ENCODE measurements at regions of chr2 and their contacts with region 1.

Region 1: DNA sequence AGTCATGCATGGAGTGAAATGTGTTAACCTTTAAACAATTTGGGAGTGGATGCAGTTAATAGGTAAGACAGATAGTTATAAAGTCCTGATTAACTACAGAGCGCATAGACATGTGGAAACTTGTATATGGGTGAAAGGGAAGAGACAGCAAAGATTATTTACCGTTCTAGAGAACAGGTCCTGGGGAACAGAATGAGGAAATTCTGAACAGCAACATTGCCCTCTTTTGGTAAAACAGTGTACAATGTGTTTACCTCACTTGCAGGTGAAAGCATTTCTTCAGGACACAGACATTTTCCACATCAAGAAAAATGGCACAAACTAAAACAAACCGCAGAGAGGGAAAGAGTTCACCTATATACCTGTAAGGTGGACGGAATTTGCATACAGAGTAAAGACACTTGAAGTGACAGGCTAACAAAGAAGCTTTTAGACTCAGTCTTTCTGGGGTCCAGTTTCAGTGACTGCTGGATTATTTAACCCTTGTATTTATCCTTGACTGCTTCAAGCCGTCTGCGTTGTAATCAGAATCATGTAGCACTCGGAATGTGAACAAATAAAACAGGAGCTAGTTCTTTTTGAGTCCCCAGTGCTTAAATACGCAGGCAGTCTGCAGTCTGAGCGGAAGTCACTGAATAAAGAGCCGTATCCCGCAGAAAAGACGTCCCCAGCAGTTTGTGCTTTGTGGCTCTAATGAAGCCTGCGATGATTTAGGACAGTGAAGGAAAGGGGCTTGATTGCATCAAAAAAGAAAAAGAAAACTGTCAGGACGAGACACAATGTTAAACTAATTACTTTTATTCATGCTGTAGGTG is 364.8 kb upstream of the GALNT5 start:
- DNase-seq: no peak
- ATAC-seq: peak in 3 of 4 donors; percentile 48 to 69 (median 57)
- H3K4me3 ChIP-seq: peak overlapping the region in 11 of 12 donors; percentile 12 to 42 (median 32)
- H3K27ac ChIP-seq: no peak overlapping the region
- H3K4me1 ChIP-seq: peaks cover 0 to 6% (median 0%) of the 10 kb centered on the region in 12 donors
- H3K27me3 ChIP-seq: peaks cover 0 to 12% (median 0%) of the 10 kb centered on the region in 9 donors
- CTCF ChIP-seq: peak in 10 of 12 donors; percentile 36 to 59 (median 46)
- POLR2A ChIP-seq: no peak

Region 2: DNA sequence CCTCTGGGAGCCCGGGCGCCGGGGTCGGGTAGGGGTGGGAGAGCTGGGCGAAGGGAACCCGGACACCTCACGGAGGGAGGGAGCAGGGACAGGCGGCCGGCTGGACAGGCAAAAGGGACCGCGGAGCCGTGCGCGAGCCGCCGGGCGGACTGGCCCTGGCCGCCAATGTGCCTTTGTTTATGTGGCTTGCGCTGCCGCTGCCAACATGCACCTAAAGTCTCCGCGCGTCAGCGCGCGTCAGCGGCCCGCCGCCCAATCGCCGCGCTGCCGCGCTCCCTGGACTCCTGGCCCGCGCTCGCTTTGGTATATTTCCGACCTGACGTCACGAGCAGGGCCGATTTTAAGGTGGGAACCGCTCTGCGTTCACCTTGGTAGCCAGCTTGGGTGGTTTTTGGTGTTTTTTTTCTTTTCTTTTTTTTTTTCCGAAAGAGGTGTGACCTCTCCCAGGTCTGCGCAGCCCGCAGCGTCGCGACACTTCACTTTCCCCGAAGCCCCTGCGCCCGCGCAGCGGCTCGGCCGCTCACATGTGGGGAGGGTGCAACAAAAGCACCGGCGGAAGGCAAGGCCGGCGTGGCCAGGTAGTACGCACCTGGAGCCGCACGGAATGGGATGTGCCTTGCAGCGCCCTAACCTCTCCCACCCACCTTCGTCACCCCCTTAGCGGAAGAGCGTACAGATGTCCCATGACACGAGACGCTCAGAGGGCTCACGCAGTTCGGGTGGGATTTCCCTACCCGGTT is 560.0 kb before region 1 on chr2 and contains the start of gene NR4A2:
- intact Hi-C with region 1: loop called in 3 of 10 experiments (anchors 5 to 10 kb)
- DNase-seq: peak; percentile 91 to 93 (median 91)
- ATAC-seq: peak; percentile 62 to 81 (median 74)
- H3K4me3 ChIP-seq: peak within 1 kb of the TSS; percentile 44 to 87 (median 80)
- H3K27ac ChIP-seq: peak within 1 kb of the TSS; percentile 97 to 100 (median 99)
- H3K4me1 ChIP-seq: peaks cover 0 to 34% (median 7%) of the 10 kb centered on the region in 12 donors
- H3K27me3 ChIP-seq: peaks cover 0 to 29% (median 13%) of the 10 kb centered on the region in 9 donors
- CTCF ChIP-seq: no peak
- POLR2A ChIP-seq: peak; percentile 37 to 93
- total RNA-seq, gene NR4A2: 0.63 to 14.2 (median 1.1) TPM

Region 3: GRCh38 chr2:156649596-156649995 is 243.1 kb before region 1 on chr2:
- intact Hi-C with region 1: loop called in 1 of 10 experiments (anchors 5 kb)
- DNase-seq: peak in 4 of 5 donors; percentile 74 to 88 (median 80)
- ATAC-seq: peak; percentile 99 to 100 (median 99)
- H3K4me3 ChIP-seq: no peak overlapping the region
- H3K27ac ChIP-seq: peak overlapping the region in 3 of 12 donors; percentile 13 to 43 (median 25)
- H3K4me1 ChIP-seq: peaks cover 0 to 4% (median 0%) of the 10 kb centered on the region in 12 donors
- H3K27me3 ChIP-seq: no peaks in the 10 kb centered on the region
- CTCF ChIP-seq: peak in 4 of 12 donors; percentile 13 to 24 (median 18)
- POLR2A ChIP-seq: no peak

Region 4: GRCh38 chr2:156704617-156705016 is 188.1 kb before region 1 on chr2:
- intact Hi-C with region 1: no loop called
- DNase-seq: peak in 4 of 5 donors; percentile 20 to 57 (median 31)
- ATAC-seq: peak in 3 of 4 donors; percentile 22 to 77 (median 64)
- H3K4me3 ChIP-seq: no peak overlapping the region
- H3K27ac ChIP-seq: peak overlapping the region in 10 of 12 donors; percentile 6 to 72 (median 43)
- H3K4me1 ChIP-seq: peaks cover 0 to 30% (median 0%) of the 10 kb centered on the region in 12 donors
- H3K27me3 ChIP-seq: no peaks in the 10 kb centered on the region
- CTCF ChIP-seq: no peak
- POLR2A ChIP-seq: no peak

Region 5: GRCh38 chr2:156745619-156746018 is 147.1 kb before region 1 on chr2:
- intact Hi-C with region 1: no loop called
- DNase-seq: no peak
- ATAC-seq: no peak
- H3K4me3 ChIP-seq: no peak overlapping the region
- H3K27ac ChIP-seq: no peak overlapping the region
- H3K4me1 ChIP-seq: no peaks in the 10 kb centered on the region
- H3K27me3 ChIP-seq: no peaks in the 10 kb centered on the region
- CTCF ChIP-seq: no peak
- POLR2A ChIP-seq: no peak

Region 6: GRCh38 chr2:157194097-157194688 is 301.5 kb after region 1 on chr2:
- intact Hi-C with region 1: loop called in 2 of 10 experiments (anchors 10 kb)
- DNase-seq: no peak
- ATAC-seq: peak in 2 of 4 donors; percentile 49 to 59
- H3K4me3 ChIP-seq: no peak overlapping the region
- H3K27ac ChIP-seq: no peak overlapping the region
- H3K4me1 ChIP-seq: peaks cover 0 to 7% (median 0%) of the 10 kb centered on the region in 12 donors
- H3K27me3 ChIP-seq: no peaks in the 10 kb centered on the region
- CTCF ChIP-seq: peak; percentile 42 to 77 (median 67)
- POLR2A ChIP-seq: no peak

Measured in heart left ventricle (tissue), 16 donors.